ENCODE measurements at regions of chr12 and their contacts with region 1.

Region 1: DNA sequence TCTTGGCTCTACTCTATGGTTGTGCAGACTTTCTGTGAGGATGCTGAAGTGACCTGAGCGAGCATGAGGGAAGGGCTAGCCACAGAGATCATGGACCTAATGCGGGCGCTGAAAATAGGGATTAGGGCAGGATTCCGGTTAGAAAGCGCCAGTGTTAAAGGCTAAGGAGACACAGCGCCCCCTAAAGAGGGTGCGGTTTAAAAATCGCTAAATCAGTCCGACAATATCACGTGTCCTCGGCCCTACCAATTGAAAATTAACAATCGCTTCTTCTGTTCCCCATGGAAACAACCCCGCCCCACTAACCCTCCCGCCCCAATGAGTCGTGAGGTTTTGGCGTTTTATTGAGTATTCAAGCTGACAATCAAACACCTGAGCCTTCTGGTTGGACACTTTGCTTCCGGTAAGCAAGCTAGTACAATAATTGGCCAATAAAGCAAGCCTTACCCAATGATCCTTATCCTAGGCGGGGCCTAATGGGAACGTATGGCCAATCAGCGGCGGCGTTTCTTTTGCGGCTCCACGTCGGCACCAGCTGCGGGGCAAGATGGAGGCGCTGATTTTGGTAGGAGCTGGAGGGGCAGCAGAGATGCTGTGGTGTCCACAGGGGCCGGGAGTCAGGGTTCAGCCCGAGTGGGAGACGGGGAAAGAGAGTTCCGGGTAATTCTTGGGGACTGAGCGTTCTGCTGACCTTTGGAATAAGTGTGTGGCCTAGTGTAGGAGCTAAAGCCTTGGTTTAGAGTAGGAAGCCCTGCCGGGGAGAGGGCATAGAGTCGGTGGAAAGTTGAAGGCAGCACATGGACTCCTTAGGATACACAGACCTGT is at the start of gene COPZ1:
- DNase-seq: peak; percentile 96
- ATAC-seq: peak; percentile 99
- H3K4me3 Mint-ChIP-seq: peak within 1 kb of the TSS; percentile 96
- H3K27ac Mint-ChIP-seq: peak within 1 kb of the TSS; percentile 92
- H3K4me1 Mint-ChIP-seq: peaks cover 36% of the 10 kb centered on the region
- H3K27me3 Mint-ChIP-seq: no peaks in the 10 kb centered on the region
- total RNA-seq, gene COPZ1: 95.2 to 98.7 TPM

Region 2: DNA sequence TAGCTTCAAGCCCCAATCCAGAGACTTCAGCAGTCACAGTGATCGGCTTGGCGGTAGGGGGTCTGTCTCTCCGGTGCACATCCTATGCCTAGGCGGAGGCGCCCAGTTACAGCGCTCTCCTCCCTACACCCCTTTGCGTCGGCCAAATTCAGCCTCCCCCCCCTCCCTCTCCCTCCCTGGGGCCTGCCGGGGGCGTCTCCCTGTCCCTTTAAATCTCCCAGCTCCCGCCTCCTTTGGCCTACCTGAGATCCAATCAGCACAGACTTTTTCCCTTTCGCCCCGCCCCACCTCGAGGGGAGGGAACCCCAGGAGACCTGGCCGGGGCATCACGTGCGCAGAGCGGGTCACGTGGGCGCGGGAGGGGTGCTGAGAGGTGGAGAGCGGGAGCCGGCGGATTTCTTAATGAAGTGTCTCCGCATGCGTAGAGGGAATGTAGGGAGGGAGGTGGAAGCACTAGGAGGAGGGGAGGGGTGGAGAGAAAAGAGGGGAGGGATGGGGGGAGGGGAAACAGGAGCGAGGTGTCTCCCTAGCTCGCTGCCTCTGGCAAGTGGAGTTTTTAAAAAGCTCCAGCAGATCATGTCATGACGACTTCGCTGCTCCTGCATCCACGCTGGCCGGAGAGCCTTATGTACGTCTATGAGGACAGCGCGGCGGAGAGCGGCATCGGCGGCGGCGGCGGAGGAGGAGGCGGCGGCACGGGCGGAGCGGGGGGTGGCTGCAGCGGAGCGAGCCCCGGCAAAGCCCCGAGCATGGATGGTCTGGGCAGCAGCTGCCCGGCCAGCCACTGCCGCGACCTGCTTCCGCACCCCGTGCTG is 386.3 kb before region 1 on chr12 and contains the start of gene HOXC13:
- CTCF ChIA-PET with region 1: no interaction called
- POLR2A ChIA-PET with region 1: no interaction called
- intact Hi-C with region 1: no loop called
- DNase-seq: peak; percentile 80
- ATAC-seq: peak; percentile 85
- H3K4me3 Mint-ChIP-seq: no peak within 1 kb of the TSS
- H3K27ac Mint-ChIP-seq: no peak within 1 kb of the TSS
- H3K4me1 Mint-ChIP-seq: peaks cover 10% of the 10 kb centered on the region
- H3K27me3 Mint-ChIP-seq: peaks cover 79% of the 10 kb centered on the region
- total RNA-seq, gene HOXC13: not detected

Region 3: GRCh38 chr12:54214553-54215406 is 110.0 kb before region 1 on chr12:
- CTCF ChIA-PET with region 1: interaction called, 9 read pairs
- POLR2A ChIA-PET with region 1: no interaction called
- intact Hi-C with region 1: loop called in 1 of 2 experiments (anchors 1 kb)
- DNase-seq: peak; percentile 97
- ATAC-seq: peak; percentile 92
- H3K4me3 Mint-ChIP-seq: peak overlapping the region; percentile 63
- H3K27ac Mint-ChIP-seq: no peak overlapping the region
- H3K4me1 Mint-ChIP-seq: peaks cover 26% of the 10 kb centered on the region
- H3K27me3 Mint-ChIP-seq: peaks cover 15% of the 10 kb centered on the region

Region 4: DNA sequence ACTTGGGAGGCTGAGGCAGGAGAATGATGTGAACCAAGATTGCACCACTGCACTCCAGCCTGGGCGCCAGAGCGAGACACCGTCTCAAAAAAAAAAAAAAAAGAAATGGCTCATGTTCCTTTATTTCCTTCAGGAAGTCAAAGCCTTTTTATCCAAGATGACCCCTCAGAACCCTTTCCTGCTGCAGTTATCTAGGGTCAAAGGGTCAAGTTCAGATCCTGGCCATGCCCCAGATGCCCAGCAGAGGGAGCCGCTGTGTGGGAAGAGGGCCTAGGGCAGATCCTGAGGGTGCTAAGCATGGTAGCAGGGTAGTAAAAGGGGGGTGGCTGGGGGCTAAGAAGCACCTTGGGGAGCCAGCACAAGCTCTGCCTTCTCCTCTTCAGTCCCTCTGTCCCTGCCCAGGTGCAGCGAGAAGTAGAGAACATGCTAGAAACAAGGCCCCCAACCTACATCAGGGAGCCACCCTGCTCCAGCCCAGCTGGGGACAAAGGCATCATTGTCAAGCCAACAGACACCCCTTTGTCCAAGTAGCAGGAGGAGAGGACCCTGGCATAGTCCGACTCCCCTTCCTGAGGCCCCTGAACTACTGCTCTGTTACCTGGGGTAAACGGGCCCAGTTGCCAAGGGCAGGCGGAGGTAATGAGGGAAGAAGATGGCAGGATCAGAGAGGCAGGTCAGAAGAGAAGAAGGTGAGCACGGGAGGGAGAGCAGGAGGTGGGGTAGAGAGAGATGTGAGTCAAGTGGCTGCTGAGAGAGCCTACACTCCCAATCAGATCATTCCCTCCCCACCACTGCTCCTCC is 30.5 kb before region 1 on chr12:
- CTCF ChIA-PET with region 1: interaction called, 21 read pairs
- POLR2A ChIA-PET with region 1: interaction called, 6 read pairs
- intact Hi-C with region 1: no loop called
- DNase-seq: peak; percentile 83
- ATAC-seq: peak; percentile 82
- H3K4me3 Mint-ChIP-seq: no peak overlapping the region
- H3K27ac Mint-ChIP-seq: no peak overlapping the region
- H3K4me1 Mint-ChIP-seq: peaks cover 5% of the 10 kb centered on the region
- H3K27me3 Mint-ChIP-seq: peaks cover 10% of the 10 kb centered on the region

Region 5: DNA sequence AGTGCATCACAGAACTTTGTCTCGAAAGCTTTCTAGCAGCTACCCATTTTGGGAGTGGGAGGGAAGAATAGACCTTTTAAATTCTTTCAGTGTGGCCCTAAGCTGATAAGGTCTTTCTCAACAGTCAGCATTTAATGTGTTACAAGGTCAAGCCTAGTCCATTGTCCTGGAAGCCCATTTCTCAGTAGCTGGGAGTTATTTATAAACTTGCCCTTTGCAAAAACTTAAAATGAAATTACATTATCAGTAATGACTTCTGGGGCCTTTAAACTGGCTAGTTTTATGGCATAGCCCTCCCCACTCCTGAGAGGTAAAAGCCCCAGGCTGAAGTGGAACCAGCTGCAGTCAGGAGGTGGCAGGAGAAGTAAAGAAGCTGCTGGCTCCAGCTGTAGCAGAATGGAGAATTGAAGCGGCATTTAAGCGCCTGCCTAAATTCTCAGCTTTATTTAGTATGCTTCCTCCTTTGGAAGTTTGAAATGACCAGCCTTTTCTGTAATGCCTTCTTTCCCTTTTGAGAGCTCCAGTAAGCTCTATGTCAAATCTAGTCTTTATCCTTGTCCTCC is 12.5 kb after region 1 on chr12:
- CTCF ChIA-PET with region 1: interaction called, 49 read pairs
- POLR2A ChIA-PET with region 1: interaction called, 3 read pairs
- intact Hi-C with region 1: no loop called
- DNase-seq: no peak
- ATAC-seq: no peak
- H3K4me3 Mint-ChIP-seq: no peak overlapping the region
- H3K27ac Mint-ChIP-seq: no peak overlapping the region
- H3K4me1 Mint-ChIP-seq: peaks cover 13% of the 10 kb centered on the region
- H3K27me3 Mint-ChIP-seq: no peaks in the 10 kb centered on the region

Region 6: GRCh38 chr12:54368709-54369583 is 44.1 kb after region 1 on chr12:
- CTCF ChIA-PET with region 1: interaction called, 17 read pairs
- POLR2A ChIA-PET with region 1: interaction called, 3 read pairs
- intact Hi-C with region 1: no loop called
- DNase-seq: peak; percentile 96
- ATAC-seq: peak; percentile 82
- H3K4me3 Mint-ChIP-seq: peak overlapping the region; percentile 4
- H3K27ac Mint-ChIP-seq: no peak overlapping the region
- H3K4me1 Mint-ChIP-seq: peaks cover 41% of the 10 kb centered on the region
- H3K27me3 Mint-ChIP-seq: peaks cover 2% of the 10 kb centered on the region

Measured in activated CD4-positive, alpha-beta T cell treated with anti-CD3 and anti-CD28 coated beads for 36 hours (primary cell).